Activated CD4-positive, alpha-beta memory T cell treated with anti-CD3 and anti-CD28 coated beads for 36 hours (primary cell): ENCODE measurements at regions of chr3 and their contacts with region 1.

Region 1: DNA sequence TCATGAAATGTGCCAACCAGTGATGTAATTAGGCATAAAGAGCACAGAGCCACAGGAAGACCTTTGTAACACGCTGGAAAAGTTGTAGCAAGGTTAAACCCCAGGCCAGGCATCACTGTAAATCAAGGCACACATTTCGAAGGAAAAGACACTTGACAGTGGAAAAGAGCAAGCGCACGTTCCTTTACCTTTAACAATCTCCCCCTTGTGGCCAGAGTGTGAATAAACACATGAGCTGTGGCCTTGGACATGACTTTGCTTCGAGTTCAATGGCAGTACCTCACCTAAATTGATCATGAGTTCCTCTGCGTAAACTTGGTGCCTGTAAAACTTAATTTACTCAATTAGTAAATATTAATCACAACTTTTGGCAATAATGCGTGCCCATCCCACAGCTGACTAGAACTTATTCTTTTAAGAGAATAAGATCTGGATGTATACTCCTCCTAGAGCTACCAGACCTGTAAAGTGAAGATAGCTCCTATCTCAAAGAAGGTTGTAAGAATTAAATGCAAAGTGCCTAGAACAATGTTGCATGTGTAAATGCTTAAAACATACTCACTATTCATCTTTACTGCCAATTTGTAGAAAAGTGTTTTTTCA is 757.0 kb upstream of the NECTIN3 start:
- DNase-seq: peak; percentile 53
- H3K4me3 Mint-ChIP-seq: no peak overlapping the region
- H3K27ac Mint-ChIP-seq: no peak overlapping the region
- H3K4me1 Mint-ChIP-seq: peaks cover 5% of the 10 kb centered on the region
- H3K27me3 Mint-ChIP-seq: no peaks in the 10 kb centered on the region

Region 2: DNA sequence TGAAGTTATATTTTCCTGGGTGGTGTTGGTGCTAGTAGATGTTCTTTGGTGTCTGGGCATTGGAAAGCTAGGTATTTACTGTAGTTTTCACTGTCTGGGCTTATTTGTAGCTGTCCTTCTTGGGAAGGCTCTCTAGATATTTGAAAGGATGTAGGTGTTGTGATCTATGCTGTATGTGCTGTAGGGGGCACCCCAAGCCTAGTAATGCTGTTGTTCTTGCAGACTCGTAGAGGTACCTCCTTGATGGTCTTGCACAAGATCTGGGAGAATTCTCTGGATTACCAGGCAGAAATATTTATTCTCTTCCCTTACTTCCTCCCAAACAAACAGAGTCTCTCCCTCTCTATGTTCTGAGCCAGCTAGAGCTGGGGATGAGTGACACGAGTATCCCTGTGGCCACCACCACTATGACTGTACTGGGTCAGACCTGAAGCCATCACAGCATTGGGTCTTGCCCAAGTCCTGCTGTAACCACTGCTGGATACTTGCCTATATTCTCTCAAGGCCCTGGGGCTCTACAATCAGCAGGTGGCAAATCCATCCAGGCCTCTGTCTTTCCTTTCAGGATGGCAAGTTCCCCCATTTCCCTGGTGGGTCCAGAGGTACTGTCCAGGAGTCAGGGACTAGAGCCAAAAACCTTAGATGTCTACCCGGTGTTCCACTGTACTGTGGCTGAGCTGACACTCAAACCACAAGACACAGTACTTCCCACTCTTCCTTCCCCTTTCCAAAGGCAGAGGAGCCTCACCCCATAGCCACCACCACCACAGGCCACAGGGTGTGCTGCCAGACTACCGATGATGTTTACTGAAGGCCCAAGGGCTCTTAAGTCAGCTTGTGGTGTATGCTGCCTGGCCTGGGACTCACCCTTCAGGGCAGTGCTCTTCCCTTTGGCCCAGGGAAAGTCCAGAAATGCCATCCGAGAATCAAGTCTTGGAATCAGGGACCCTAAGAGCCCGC is 782.1 kb before region 1 on chr3:
- CTCF ChIA-PET with region 1: interaction called, 10 read pairs
- POLR2A ChIA-PET with region 1: no interaction called
- intact Hi-C with region 1: no loop called
- DNase-seq: peak; percentile 55
- H3K4me3 Mint-ChIP-seq: no peak overlapping the region
- H3K27ac Mint-ChIP-seq: no peak overlapping the region
- H3K4me1 Mint-ChIP-seq: no peaks in the 10 kb centered on the region
- H3K27me3 Mint-ChIP-seq: peaks cover 2% of the 10 kb centered on the region

Region 3: DNA sequence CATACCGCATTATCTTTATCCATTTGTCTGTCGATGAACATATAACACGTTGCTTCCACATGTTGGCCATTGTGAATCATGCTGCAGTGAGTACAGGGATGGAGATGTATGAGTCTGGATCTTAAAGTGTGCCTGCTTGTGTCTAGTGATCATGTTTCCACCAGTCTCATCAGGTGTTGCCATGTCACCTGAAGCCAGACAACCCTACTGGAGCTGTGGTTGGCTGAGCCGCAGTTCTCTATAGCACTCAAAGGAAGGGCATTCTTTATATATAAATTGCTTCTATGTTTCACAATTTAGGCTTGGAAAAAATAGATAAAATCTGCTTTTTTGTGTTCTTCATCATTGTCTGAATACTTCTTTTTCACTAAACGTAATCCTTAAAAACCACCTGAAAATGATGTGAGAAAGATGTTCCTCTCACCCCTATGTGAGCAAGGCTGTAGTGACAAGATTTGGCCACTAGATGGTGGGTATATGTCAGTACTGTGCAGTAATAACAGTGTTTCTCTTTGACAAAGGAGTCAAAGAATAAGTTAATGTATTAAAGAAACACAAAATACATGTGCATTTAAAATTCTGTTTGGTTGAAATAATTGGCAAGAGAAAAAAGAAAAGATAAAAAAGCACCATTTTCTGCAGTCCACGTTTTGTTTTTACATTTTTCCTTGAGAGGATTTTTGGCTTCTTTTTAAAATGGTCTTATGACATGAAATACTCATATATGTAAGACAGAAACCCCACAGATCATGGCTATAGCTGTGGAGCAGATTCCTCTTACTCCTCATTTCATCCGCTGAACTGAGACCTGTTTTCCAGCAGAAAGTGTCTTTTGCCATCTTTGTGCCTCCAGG is 582.8 kb before region 1 on chr3:
- CTCF ChIA-PET with region 1: interaction called, 19 read pairs
- POLR2A ChIA-PET with region 1: no interaction called
- intact Hi-C with region 1: loop called (anchors 1 kb)
- DNase-seq: peak; percentile 44
- H3K4me3 Mint-ChIP-seq: no peak overlapping the region
- H3K27ac Mint-ChIP-seq: no peak overlapping the region
- H3K4me1 Mint-ChIP-seq: peaks cover 6% of the 10 kb centered on the region
- H3K27me3 Mint-ChIP-seq: no peaks in the 10 kb centered on the region

Region 4: DNA sequence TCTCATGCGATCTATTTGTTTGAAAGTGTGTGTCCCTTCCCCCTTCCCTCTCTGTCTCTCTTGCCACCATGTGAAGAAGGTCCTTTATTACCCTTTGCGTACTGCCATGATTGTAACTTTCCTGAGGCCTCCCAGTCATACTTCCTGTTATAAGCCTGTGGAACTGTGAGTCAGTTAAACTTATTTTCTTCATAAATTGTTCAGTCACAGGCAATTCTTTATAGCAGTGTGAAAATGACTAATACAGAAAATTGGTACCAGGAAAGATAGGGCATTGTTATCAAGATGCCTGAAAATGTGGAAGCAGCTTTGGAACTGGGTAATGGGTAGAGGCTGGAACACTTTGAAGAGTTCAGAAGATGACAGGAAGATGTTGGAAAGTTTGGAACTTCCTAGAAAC is 13.3 kb after region 1 on chr3:
- CTCF ChIA-PET with region 1: interaction called, 26 read pairs
- POLR2A ChIA-PET with region 1: no interaction called
- intact Hi-C with region 1: no loop called
- DNase-seq: no peak
- H3K4me3 Mint-ChIP-seq: no peak overlapping the region
- H3K27ac Mint-ChIP-seq: no peak overlapping the region
- H3K4me1 Mint-ChIP-seq: no peaks in the 10 kb centered on the region
- H3K27me3 Mint-ChIP-seq: peaks cover 2% of the 10 kb centered on the region

Region 5: DNA sequence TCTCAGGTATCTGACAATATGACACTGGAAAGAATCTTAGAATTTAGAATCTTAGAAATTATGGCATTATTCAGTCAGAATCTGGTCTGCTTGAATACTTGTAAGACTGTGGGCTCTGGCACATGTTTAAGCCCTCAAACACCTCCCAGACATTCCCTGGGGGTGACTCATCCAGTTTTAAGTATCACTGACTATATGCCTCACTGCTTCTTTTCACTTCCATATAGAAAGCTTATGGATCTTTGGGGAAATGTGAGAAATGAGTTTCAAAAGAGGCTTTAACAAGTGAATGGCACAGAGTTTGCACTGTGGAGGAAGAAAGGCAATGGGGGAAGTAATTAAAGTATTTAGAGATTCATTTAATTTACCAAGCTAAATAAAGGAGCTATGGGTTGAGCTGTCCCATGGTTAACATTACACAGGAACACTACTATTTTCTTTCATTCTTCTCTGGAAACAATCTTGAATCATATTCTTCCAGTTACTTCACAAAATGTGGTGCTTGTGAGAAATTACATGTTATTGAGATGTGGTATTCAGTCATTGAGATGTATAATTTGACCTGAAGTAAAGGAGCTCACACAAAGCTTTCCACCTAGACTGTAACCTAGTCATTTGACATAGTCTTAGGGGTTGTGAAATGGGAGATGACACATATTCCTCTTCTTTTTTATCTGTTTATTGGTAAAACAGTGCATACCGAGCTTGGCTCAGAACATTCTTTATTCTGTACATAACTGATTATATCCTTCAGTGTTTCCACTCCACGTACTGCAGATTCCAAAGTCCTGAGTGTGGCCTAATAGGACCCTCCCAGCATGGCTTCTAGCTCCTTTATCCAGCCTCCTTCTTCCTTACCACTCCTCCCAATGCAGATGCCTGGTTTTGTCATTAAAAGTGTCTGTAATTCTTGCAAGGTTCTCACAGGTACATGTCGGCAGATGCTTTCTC is 212.4 kb after region 1 on chr3:
- CTCF ChIA-PET with region 1: no interaction called
- POLR2A ChIA-PET with region 1: no interaction called
- intact Hi-C with region 1: no loop called
- DNase-seq: no peak
- H3K4me3 Mint-ChIP-seq: no peak overlapping the region
- H3K27ac Mint-ChIP-seq: no peak overlapping the region
- H3K4me1 Mint-ChIP-seq: no peaks in the 10 kb centered on the region
- H3K27me3 Mint-ChIP-seq: no peaks in the 10 kb centered on the region

Region 6: DNA sequence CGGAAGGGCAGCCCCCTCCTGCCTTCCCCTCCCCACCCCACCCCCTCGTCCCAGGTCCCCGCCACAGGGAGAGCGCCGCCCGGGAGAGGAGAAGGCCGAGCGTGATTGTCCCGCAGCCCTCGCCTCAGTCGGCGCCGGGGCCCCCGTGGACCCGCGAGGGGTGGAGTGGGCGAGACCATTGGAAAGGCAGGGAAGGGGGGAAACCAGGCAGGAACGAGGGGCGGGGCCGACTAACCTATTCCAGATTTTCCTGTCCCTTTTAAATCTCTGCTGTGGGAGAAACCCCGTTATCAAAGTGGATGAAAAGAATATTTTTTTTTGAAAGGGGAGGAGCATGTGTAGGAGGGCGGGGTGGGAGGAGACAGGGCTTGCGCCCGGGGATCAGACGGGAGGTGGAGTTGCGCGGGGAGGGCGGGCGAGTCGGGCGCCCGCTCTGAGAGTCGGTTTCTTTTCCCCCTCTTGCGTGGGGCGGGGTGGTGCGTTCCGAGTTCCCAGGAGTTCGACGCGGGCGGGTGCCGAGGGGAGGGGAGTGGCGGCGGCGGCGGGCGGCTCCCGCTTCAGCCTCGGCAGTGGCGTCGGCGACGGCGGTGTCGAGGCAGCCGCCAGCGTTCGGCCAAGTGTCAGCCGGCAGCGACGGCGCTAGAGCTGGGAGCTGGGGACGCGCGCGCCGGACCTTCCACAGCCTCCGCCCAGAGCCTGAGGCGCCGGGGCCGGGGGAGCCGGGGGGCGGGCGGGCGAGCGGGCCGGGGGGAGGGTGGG is 756.8 kb after region 1 on chr3 and contains the start of gene NECTIN3:
- CTCF ChIA-PET with region 1: no interaction called
- POLR2A ChIA-PET with region 1: no interaction called
- intact Hi-C with region 1: loop called (anchors 5 kb)
- DNase-seq: peak; percentile 92
- H3K4me3 Mint-ChIP-seq: peak within 1 kb of the TSS; percentile 91
- H3K27ac Mint-ChIP-seq: peak within 1 kb of the TSS; percentile 75
- H3K4me1 Mint-ChIP-seq: peaks cover 41% of the 10 kb centered on the region
- H3K27me3 Mint-ChIP-seq: peaks cover 20% of the 10 kb centered on the region
- total RNA-seq, gene NECTIN3: 10.5 to 11.3 TPM

Region 7: DNA sequence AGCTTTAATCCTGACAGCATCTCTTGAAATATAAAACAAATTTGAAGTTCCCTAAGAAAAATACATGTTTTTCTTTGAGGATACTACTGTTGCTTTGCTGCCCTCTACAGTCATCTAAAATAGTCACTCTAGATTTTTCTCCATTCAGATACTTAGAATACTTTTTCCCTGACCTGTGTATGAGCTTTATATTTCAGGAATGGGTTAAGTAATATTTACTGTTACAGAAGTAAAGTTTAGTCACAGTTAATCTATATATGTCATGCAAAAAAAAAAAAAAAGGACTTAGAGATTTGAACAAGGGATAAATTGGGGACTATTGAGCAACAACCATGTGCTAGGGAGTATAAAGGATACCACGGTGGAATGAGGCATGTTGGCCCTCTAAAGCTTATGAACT is 765.8 kb after region 1 on chr3:
- CTCF ChIA-PET with region 1: interaction called, 12 read pairs
- POLR2A ChIA-PET with region 1: no interaction called
- intact Hi-C with region 1: no loop called
- DNase-seq: no peak
- H3K4me3 Mint-ChIP-seq: no peak overlapping the region
- H3K27ac Mint-ChIP-seq: no peak overlapping the region
- H3K4me1 Mint-ChIP-seq: peaks cover 4% of the 10 kb centered on the region
- H3K27me3 Mint-ChIP-seq: peaks cover 2% of the 10 kb centered on the region